T-cell (primary cell): ENCODE measurements at regions of chr6 and their contacts with region 1.

Region 1: DNA sequence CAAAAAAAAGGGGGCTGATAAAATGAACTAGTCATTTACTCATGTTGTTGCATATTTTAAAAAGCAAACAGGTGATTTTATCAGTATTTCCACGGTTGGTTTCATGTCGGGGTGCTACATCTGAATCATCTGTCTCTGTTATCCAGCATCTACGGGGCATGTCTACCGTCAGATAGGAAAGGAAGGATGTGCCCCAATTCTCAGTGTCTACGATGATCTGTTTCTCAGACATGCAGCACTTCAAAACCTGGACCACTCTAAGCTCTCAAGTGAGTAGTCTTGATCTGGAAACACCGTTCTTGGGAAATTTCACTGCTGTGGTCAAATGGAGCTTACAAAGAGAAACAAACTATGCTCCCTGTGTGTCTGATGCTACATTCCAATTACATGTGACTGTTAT is 240.3 kb upstream of the TAB2 start:
- DNase-seq: peak in 1 of 35 experiments; percentile 35
- ATAC-seq: peak in 3 of 4 experiments; percentile 38 to 50 (median 47)
- H3K4me3 ChIP-seq: no peak overlapping the region
- H3K4me3 Mint-ChIP-seq: no peak overlapping the region
- H3K27ac ChIP-seq: no peak overlapping the region
- H3K27ac Mint-ChIP-seq: peak overlapping the region in 1 of 2 donors; percentile 52
- H3K4me1 ChIP-seq: peaks cover 0 to 10% of the 10 kb centered on the region in 2 experiments
- H3K4me1 Mint-ChIP-seq: peaks cover 13 to 32% (median 20%) of the 10 kb centered on the region in 3 donors
- H3K27me3 ChIP-seq: no peaks in the 10 kb centered on the region
- H3K27me3 Mint-ChIP-seq: no peaks in the 10 kb centered on the region

Region 2: GRCh38 chr6:148926478-148926877 is 150.7 kb before region 1 on chr6:
- CTCF ChIA-PET with region 1: no interaction called
- POLR2A ChIA-PET with region 1: no interaction called
- DNase-seq: no peak
- ATAC-seq: no peak
- H3K4me3 ChIP-seq: no peak overlapping the region
- H3K4me3 Mint-ChIP-seq: no peak overlapping the region
- H3K27ac ChIP-seq: no peak overlapping the region
- H3K27ac Mint-ChIP-seq: no peak overlapping the region
- H3K4me1 ChIP-seq: no peaks in the 10 kb centered on the region
- H3K4me1 Mint-ChIP-seq: no peaks in the 10 kb centered on the region
- H3K27me3 ChIP-seq: no peaks in the 10 kb centered on the region
- H3K27me3 Mint-ChIP-seq: no peaks in the 10 kb centered on the region

Region 3: GRCh38 chr6:149028767-149029405 is 48.3 kb before region 1 on chr6:
- CTCF ChIA-PET with region 1: interaction called, 6 read pairs
- POLR2A ChIA-PET with region 1: interaction called in 1 of 2 experiments, 11 read pairs
- DNase-seq: peak in 32 of 35 experiments; percentile 29 to 92 (median 54)
- ATAC-seq: peak; percentile 34 to 77 (median 62)
- H3K4me3 ChIP-seq: no peak overlapping the region
- H3K4me3 Mint-ChIP-seq: no peak overlapping the region
- H3K27ac ChIP-seq: no peak overlapping the region
- H3K27ac Mint-ChIP-seq: peak overlapping the region in 1 of 2 donors; percentile 81
- H3K4me1 ChIP-seq: peaks cover 3 to 17% of the 10 kb centered on the region in 2 experiments
- H3K4me1 Mint-ChIP-seq: peaks cover 23 to 49% (median 34%) of the 10 kb centered on the region in 3 donors
- H3K27me3 ChIP-seq: peaks cover 0 to 4% of the 10 kb centered on the region in 2 experiments
- H3K27me3 Mint-ChIP-seq: no peaks in the 10 kb centered on the region